ENCODE measurements at regions of chr12 and their contacts with region 1.

Region 1: DNA sequence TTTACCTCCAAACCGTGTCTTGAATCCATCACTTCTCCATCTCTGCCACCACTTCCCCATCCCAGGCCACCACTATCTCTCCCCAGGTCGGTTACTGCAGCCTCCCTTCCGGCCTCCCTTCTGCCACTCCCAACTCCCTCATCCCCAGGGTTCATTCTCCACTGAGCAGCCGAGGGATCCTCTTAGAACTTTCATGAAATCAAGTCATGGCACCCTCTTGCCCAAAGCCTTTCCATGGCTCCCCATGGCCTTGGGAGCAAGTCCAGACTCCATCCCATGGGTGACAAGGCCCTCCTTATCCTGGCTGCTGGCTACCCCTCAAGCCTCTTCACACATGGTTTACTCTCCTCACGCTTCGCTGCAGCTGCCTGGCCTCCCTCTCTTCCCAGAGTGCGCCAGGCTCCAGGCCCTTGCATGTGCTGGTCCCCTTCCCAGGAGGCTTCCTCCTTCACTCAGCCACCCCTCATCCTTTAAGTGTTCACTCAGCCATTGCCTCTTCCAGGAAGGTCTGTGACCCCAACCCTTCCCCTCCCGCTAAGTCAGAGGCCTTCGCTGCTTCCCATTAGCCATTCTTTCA is 17.9 kb upstream of the SH2B3 start:
- DNase-seq: no peak
- ATAC-seq: peak; percentile 29; the same call in 1 of the 2 replicates
- H3K4me3 ChIP-seq: no peak overlapping the region
- H3K27ac ChIP-seq: no peak overlapping the region
- H3K4me1 ChIP-seq: no peaks in the 10 kb centered on the region
- H3K27me3 ChIP-seq: no peaks in the 10 kb centered on the region
- CTCF ChIP-seq: no peak

Region 2: DNA sequence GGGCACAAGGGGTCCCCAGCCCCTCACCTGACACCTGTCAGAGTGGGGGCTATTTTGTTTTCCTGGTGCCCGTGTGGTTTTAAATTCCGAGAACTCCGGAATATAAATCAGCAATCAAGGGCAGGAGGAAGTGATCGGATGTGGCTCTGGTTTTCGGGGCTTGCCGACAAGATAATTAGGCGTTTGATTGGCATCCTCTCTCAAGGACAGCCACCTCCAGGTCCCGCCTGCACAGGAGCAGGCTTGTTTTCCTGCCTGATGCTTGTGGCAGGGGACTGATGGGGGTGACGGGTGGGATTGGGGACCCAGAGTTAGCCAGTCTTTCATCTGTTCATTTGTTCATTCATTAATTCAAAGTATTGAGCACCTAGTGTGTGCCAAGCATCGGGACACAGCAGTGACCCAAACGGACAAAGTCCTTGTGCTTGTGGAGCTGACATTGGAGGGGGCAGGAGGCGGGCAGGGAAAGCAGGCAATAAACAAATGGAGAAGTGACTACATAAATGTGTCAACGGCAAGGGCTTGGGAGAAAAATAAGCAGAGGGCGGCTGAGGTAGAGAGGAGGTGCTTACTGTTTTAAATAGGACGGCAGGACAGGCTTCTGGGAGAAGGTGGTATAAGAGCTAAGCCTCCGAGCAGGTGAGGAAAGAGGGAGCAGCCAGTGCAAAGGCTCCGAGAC is 185.5 kb before region 1 on chr12:
- CTCF ChIA-PET with region 1: no interaction called
- POLR2A ChIA-PET with region 1: interaction called, 16 read pairs
- in situ Hi-C with region 1: no loop called
- intact Hi-C with region 1: no loop called
- DNase-seq: no peak
- ATAC-seq: no peak
- H3K4me3 ChIP-seq: no peak overlapping the region
- H3K27ac ChIP-seq: no peak overlapping the region
- H3K4me1 ChIP-seq: no peaks in the 10 kb centered on the region
- H3K27me3 ChIP-seq: peaks cover 10% of the 10 kb centered on the region; the same call in 1 of the 2 replicates
- CTCF ChIP-seq: no peak

Region 3: DNA sequence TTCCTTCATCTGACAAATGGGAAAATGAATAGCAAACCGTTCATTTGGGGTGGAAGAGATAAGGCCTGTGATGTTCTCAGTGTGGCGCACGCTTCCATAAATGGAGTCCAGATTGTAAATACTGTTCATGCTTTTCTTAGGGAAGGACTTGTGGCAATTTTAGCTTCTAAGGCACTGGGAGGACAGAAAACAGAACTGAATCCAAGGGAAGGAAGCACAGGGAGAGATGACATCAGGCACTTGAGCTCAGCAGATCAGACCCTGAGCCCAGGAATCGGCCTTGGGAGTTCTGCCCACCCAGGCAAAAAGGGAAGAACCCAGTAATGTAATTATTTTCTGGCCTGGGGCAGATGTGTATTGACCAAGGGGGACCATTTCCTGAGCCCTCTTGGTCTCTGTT is 10.7 kb after region 1 on chr12:
- CTCF ChIA-PET with region 1: no interaction called
- POLR2A ChIA-PET with region 1: no interaction called
- in situ Hi-C with region 1: no loop called
- intact Hi-C with region 1: no loop called
- DNase-seq: no peak
- ATAC-seq: no peak
- H3K4me3 ChIP-seq: no peak overlapping the region
- H3K27ac ChIP-seq: peak overlapping the region; percentile 44; the same call in 1 of the 2 replicates
- H3K4me1 ChIP-seq: peaks cover 23% of the 10 kb centered on the region
- H3K27me3 ChIP-seq: no peaks in the 10 kb centered on the region
- CTCF ChIP-seq: no peak

Region 4: DNA sequence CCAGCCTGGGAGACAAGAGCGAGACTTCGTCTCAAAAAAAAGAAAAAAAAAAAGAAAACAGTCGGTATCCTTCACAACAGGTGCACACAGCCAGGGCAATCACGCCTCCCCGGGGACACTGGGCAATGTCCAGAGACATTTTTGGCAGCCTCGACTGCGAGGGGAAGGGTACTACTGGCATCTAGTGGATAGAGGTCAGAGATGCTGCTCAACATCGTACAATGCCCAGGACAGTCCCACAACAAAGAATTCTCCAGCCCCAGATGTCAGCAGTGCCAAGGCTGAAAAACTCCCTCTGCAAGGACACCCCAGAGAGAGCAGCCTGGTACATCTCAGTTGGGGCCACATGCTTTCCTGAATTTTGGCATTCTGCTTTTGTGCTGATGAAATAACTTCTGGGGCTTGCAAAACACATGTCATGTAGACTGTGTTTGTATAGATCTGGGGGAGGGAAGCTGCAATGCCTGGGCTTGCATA is 400.4 kb after region 1 on chr12:
- CTCF ChIA-PET with region 1: no interaction called
- POLR2A ChIA-PET with region 1: no interaction called
- in situ Hi-C with region 1: no loop called
- intact Hi-C with region 1: no loop called
- DNase-seq: peak; percentile 27
- ATAC-seq: peak; percentile 90
- H3K4me3 ChIP-seq: no peak overlapping the region
- H3K27ac ChIP-seq: no peak overlapping the region; the same call in 1 of the 2 replicates
- H3K4me1 ChIP-seq: peaks cover 2% of the 10 kb centered on the region; the same call in 1 of the 2 replicates
- H3K27me3 ChIP-seq: no peaks in the 10 kb centered on the region
- CTCF ChIP-seq: no peak; the same call in 1 of the 2 replicates